ENCODE measurements at regions of chr22 and their contacts with region 1.

Region 1: GRCh38 chr22:22959147-22959827 is 71.7 kb downstream of the IGLL5 start:
- DNase-seq: peak; percentile 75
- H3K4me3 Mint-ChIP-seq: no peak overlapping the region
- H3K27ac Mint-ChIP-seq: no peak overlapping the region
- H3K4me1 Mint-ChIP-seq: peaks cover 4% of the 10 kb centered on the region
- H3K27me3 Mint-ChIP-seq: peaks cover 53% of the 10 kb centered on the region

Region 2: DNA sequence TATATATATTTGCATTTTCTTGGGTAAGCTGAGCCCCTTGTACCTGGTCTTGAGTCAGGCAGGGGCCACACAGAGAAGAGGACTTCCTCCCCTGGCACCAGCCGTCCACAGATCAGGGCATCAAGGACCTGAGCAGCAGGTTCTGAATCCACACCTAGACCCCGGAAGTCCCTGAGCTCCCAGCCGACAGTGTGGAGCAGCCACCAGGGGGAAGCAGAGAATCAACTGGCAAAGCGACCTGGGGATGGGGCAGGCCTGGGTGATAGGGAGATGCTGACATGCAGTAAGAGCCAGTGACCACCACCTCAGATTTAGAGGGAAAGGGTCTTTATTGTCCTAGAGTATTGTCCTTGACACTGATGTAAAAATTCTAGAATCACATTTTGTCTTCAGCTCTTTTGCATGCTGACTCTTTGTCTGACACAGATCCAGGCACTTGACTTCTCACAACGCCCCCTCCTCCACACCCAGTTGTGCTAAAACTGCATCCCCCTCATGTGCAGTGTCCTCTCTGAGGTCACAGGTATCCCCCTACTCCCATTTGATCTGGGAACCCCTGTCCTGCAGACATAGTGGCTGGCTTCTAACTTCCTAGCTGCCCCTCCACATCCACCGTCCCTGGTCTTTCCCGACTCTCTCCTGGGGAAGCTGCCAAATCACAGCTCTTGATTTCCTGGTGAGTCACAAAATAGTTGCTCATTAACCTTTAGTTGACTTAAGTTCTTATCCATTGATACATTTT is 205.6 kb before region 1 on chr22:
- CTCF ChIA-PET with region 1: interaction called, 23 read pairs
- POLR2A ChIA-PET with region 1: no interaction called
- DNase-seq: peak; percentile 85
- H3K4me3 Mint-ChIP-seq: no peak overlapping the region
- H3K27ac Mint-ChIP-seq: peak overlapping the region; percentile 76
- H3K4me1 Mint-ChIP-seq: peaks cover 8% of the 10 kb centered on the region
- H3K27me3 Mint-ChIP-seq: no peaks in the 10 kb centered on the region

Region 3: GRCh38 chr22:23128269-23129108 is 169.2 kb after region 1 on chr22:
- CTCF ChIA-PET with region 1: interaction called, 20 read pairs
- POLR2A ChIA-PET with region 1: no interaction called
- DNase-seq: peak; percentile 75
- H3K4me3 Mint-ChIP-seq: no peak overlapping the region
- H3K27ac Mint-ChIP-seq: no peak overlapping the region
- H3K4me1 Mint-ChIP-seq: no peaks in the 10 kb centered on the region
- H3K27me3 Mint-ChIP-seq: peaks cover 4% of the 10 kb centered on the region

Measured in activated CD4-positive, alpha-beta T cell treated with anti-CD3 and anti-CD28 coated beads, Interleukin-2, amount 10 ng/mL, durations not matched to agents 7 days and 5 days (primary cell).